ENCODE measurements at regions of chr11 and their contacts with region 1.

Region 1: DNA sequence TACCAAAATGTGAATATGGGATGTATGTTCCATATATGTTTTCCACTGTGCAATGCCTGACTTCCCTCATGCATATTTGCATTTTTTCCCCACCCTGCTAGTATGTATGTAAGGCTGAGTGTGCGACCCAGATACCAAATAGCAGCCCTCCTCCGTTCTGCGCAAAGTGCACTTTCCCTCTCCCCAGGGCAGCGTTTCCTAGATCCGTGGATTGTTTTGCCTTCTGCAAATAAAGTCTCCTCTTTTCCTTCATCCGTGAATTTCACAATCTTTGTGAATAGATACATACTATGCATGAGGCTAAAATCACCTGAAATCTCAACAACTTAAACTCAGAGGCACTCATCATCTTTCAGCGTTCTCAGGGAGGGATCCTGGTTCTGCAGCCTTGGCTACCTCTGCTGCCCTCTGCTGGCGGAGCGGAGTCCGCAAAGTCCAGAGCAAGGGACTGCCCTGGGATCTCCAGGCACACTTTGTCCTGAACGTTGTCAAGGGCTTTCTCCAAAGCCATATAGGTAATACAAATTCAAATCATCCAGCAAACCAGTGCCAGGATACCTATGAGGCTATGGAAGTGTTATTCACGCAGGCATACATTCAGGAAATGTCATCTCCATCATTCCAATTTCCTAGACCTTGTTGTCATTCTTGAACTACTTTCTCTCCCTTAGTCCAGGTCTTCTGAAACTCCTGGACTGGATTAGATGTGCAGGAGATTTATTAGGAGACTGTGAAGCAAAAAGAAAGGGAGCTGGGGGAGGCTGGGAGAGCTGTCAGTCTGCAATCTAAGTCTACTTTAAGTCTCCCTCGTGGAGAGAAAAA is 53.1 kb downstream of the CNTF start:
- DNase-seq: peak; percentile 53 to 75 (median 62)
- H3K4me3 ChIP-seq: no peak overlapping the region
- H3K27ac ChIP-seq: no peak overlapping the region
- H3K4me1 ChIP-seq: peaks cover 0 to 10% (median 3%) of the 10 kb centered on the region in 4 experiments
- H3K27me3 ChIP-seq: no peaks in the 10 kb centered on the region

Region 2: DNA sequence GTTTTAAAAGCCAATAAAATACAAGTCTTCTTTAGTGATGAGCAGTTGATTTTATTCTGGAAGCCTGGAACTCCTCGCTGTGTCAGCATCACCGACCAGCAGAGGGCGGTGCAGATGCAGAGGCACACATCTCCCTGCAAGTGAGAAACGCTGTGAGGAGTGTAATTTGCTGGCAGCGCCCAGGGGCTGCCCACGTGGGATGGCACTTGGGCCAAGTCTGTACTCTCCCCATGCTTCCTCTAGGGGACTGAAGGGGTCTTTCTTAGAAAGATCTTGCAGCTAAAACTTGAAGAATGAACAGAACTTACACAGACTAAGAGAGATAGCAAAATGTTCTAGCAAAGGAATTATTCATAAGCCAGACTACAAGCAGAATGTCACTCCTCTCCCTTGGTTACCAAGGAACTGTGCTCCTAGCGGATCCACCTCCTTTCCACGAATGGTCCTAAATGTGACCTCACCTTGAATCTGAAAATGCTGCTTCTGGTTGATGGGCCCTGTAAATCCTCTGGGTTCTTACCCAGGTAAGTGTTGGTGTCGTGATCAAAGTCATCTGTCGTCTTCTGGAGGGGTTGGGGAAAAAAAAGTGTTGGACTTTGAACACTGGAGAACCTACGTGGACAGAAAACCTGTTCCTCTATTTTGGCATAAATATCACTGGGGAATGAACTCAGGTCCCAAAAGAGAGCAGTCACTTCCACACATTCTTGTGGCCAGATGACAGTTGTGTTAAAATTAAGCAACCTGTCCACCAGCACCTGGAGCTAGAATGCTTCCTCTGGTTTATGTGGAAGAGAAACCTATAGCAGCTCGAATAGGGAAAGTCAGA is 21.3 kb before region 1 on chr11:
- CTCF ChIA-PET with region 1: interaction called, 53 read pairs
- POLR2A ChIA-PET with region 1: no interaction called
- DNase-seq: peak; percentile 88 to 95 (median 94)
- H3K4me3 ChIP-seq: no peak overlapping the region
- H3K27ac ChIP-seq: no peak overlapping the region
- H3K4me1 ChIP-seq: peaks cover 0 to 4% (median 0%) of the 10 kb centered on the region in 4 experiments
- H3K27me3 ChIP-seq: no peaks in the 10 kb centered on the region

Region 3: DNA sequence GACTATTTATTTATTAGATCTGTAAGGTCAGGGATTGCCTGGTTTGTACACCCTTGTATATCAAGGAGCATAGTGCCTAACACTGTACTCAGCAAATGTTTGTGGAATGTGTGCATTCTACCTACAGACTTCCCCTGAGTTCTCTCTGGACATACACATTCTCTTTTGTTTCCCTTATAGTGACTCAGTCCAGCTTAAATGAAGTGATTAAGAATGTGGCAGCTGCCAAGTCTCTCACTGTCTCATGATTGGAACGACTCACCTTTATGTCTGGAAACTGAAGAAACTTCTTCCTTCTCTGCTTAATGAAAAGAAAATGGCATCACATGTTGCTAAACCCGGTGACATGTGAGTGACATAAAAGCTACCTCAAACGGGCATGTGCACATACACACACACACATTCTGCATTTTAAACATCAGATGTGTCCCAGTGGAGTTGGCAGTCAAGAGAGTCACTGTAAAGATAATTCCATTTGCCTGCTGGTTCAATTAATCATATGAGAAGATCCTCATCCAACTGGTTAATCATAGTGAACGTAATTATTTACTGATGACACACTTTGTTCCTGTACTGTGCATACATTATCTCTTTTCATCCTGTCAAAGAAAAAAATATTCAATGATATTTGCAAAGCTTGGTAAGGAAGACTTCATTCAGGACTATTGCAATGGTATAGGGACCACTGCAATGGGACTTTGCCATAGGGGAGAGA is 13.4 kb after region 1 on chr11:
- CTCF ChIA-PET with region 1: interaction called, 61 read pairs
- POLR2A ChIA-PET with region 1: no interaction called
- DNase-seq: peak in 1 of 3 donors; percentile 39
- H3K4me3 ChIP-seq: no peak overlapping the region
- H3K27ac ChIP-seq: no peak overlapping the region
- H3K4me1 ChIP-seq: peaks cover 16 to 50% (median 23%) of the 10 kb centered on the region in 4 experiments
- H3K27me3 ChIP-seq: no peaks in the 10 kb centered on the region

Region 4: GRCh38 chr11:58762284-58763119 is 87.0 kb after region 1 on chr11:
- CTCF ChIA-PET with region 1: no interaction called
- POLR2A ChIA-PET with region 1: no interaction called
- DNase-seq: no peak
- H3K4me3 ChIP-seq: no peak overlapping the region
- H3K27ac ChIP-seq: no peak overlapping the region
- H3K4me1 ChIP-seq: no peaks in the 10 kb centered on the region
- H3K27me3 ChIP-seq: no peaks in the 10 kb centered on the region